ENCODE measurements at regions of chr22 and their contacts with region 1.

Region 1: GRCh38 chr22:33553493-33553892 is 366.8 kb downstream of the LARGE1 start:
- DNase-seq: no peak
- ATAC-seq: no peak
- H3K4me3 ChIP-seq: no peak overlapping the region
- H3K27ac ChIP-seq: no peak overlapping the region
- H3K4me1 ChIP-seq: no peaks in the 10 kb centered on the region
- H3K27me3 ChIP-seq: no peaks in the 10 kb centered on the region
- CTCF ChIP-seq: no peak
- POLR2A ChIP-seq: no peak

Region 2: GRCh38 chr22:33090836-33091235 is 462.7 kb before region 1 on chr22:
- in situ Hi-C with region 1: no loop called
- intact Hi-C with region 1: loop called (anchors 5 kb)
- DNase-seq: no peak
- ATAC-seq: no peak
- H3K4me3 ChIP-seq: no peak overlapping the region
- H3K27ac ChIP-seq: no peak overlapping the region
- H3K4me1 ChIP-seq: no peaks in the 10 kb centered on the region
- H3K27me3 ChIP-seq: peaks cover 0 to 4% (median under 1%) of the 10 kb centered on the region in 3 donors
- CTCF ChIP-seq: no peak
- POLR2A ChIP-seq: no peak

Region 3: DNA sequence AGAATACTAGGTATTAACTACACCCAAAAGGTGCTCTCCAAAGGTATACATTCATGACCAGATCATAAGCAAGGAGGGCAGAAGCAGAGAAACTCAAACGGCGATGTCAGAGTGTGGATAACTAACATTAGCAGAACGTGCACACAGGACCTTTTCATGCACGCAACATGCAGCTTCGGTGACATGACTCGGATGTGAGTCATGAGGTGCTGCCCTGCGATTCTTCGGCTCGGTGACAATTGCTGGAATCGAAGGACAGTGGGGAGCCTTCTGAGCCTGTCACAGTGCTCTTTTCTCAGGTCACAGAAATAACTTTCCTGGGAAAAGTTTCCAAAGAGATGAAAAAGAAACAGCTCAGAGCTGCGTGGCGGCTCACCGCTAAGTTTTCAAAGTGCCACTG is 76.8 kb before region 1 on chr22:
- in situ Hi-C with region 1: no loop called
- intact Hi-C with region 1: no loop called
- DNase-seq: peak in 1 of 2 donors; percentile 19
- ATAC-seq: peak; percentile 58 to 76
- H3K4me3 ChIP-seq: no peak overlapping the region
- H3K27ac ChIP-seq: peak overlapping the region in 1 of 4 donors; percentile 30
- H3K4me1 ChIP-seq: peaks cover 36 to 37% of the 10 kb centered on the region in 2 donors
- H3K27me3 ChIP-seq: no peaks in the 10 kb centered on the region
- CTCF ChIP-seq: no peak
- POLR2A ChIP-seq: no peak

Region 4: GRCh38 chr22:33529424-33530113 is 23.9 kb before region 1 on chr22:
- in situ Hi-C with region 1: no loop called
- intact Hi-C with region 1: no loop called
- DNase-seq: no peak
- ATAC-seq: peak; percentile 39 to 66
- H3K4me3 ChIP-seq: no peak overlapping the region
- H3K27ac ChIP-seq: peak overlapping the region in 3 of 4 donors; percentile 42 to 60 (median 49)
- H3K4me1 ChIP-seq: peaks cover 24 to 25% of the 10 kb centered on the region in 2 donors
- H3K27me3 ChIP-seq: no peaks in the 10 kb centered on the region
- CTCF ChIP-seq: no peak
- POLR2A ChIP-seq: no peak

Measured in gastrocnemius medialis (tissue), 4 donors.